HepG2 (cell line): ENCODE measurements at regions of chr11 and their contacts with region 1.

Region 1: DNA sequence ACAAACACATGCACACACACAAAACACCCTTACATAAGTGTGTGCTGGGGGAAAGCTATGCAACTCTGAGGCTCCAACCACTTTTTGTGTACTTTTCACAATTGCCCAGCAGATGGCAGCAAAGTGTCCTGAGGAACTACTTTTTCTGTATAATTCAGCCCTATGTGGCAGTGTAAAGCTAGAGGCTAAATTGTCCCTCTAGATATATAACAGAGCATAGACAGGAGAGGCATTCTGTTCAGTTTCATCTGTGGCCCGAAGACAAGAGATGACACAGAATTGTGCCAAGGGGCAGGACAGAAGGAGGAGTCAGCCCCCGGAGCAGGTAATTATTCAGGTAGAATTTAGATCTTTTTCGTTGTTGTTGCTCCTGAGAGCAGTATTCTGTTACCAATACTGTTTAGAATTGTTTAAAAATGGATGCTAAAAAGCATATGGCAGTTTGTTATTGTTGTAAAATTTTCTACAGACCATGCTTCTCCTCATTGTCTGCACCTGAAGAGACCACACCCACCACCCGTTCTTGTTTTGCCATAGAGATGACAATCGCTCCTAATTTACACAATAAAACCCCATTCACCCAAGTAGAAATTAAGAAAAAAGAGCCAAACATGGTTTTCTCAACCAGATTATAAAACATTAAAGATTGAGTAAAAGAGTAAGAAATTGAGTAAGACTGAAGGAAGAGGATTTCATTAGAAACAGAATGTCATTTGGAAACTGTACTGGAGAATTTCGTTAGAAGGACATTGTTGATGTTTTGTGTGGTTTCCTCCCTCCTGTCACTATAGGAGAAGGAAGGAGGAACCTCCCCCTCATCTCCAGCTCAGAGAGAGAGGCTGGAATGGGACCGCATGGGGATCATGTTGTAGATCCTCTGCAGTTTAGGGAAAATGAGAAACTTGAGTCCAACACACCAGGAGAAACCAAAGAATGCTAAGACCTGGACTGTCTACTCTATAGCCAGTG is 14.5 kb upstream of the MS4A7 start:
- DNase-seq: peak; percentile 58
- ATAC-seq: peak; percentile 79
- H3K4me3 ChIP-seq: no peak overlapping the region
- H3K27ac ChIP-seq: no peak overlapping the region
- H3K4me1 ChIP-seq: no peaks in the 10 kb centered on the region
- H3K27me3 ChIP-seq: peaks cover 0 to 3% of the 10 kb centered on the region in 2 experiments; a peak in 1 of 5 replicates
- CTCF ChIP-seq: peak; percentile 78
- EP300 ChIP-seq: no peak
- POLR2A ChIP-seq: no peak
- RAD21 ChIP-seq: no peak

Region 2: DNA sequence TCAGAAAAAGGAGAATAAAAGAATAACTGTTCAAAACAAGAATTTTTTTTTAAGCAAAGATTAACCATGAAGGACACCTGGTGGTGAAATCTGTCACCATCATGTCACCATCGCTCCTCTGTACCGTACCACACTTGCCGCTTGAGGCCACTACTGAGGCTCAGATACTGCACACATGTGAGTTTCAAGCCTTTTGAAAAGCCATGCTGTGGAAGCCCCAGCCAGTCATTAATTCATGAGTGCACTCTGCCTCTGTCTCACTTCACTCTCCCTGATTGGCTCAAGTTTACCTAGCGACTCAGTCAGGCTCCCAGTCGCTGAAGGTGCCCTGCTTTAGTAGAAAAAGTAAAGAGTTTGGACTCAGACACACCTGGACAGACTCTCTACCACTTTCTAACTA is 122.2 kb after region 1 on chr11:
- CTCF ChIA-PET with region 1: interaction called, 13 read pairs
- POLR2A ChIA-PET with region 1: no interaction called
- in situ Hi-C with region 1: no loop called
- intact Hi-C with region 1: loop called (anchors 2 kb)
- DNase-seq: peak; percentile 54
- ATAC-seq: peak; percentile 100
- H3K4me3 ChIP-seq: no peak overlapping the region
- H3K27ac ChIP-seq: no peak overlapping the region
- H3K4me1 ChIP-seq: no peaks in the 10 kb centered on the region
- H3K27me3 ChIP-seq: no peaks in the 10 kb centered on the region
- CTCF ChIP-seq: peak; percentile 66
- EP300 ChIP-seq: no peak
- POLR2A ChIP-seq: no peak
- RAD21 ChIP-seq: no peak

Region 3: DNA sequence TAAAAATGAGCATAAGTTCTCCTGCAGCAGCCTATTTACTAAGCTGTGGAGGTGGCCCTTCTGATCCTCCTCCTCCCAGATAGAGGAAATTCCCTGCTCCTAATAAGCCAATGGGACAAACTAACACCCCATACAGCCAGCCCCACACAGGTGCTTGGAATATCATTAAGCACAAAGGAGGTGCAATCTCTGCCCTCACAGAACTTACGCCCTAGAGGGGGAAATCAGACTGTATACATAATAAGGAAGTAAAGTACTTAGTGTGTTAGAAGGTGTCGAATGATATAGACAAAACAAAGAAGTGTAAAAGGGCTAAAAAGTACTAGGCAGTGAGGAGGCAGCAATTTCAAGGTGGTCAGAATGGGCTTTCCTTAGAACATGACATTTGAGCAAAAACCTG is 134.6 kb after region 1 on chr11:
- CTCF ChIA-PET with region 1: no interaction called
- POLR2A ChIA-PET with region 1: no interaction called
- in situ Hi-C with region 1: no loop called
- intact Hi-C with region 1: no loop called
- DNase-seq: no peak
- ATAC-seq: no peak
- H3K4me3 ChIP-seq: no peak overlapping the region
- H3K27ac ChIP-seq: no peak overlapping the region
- H3K4me1 ChIP-seq: no peaks in the 10 kb centered on the region
- H3K27me3 ChIP-seq: peaks cover 0 to 3% of the 10 kb centered on the region in 2 experiments; a peak in 1 of 5 replicates
- CTCF ChIP-seq: no peak
- EP300 ChIP-seq: no peak
- POLR2A ChIP-seq: no peak
- RAD21 ChIP-seq: no peak

Region 4: GRCh38 chr11:60615497-60615896 is 251.7 kb after region 1 on chr11:
- CTCF ChIA-PET with region 1: interaction called, 14 read pairs
- POLR2A ChIA-PET with region 1: no interaction called
- in situ Hi-C with region 1: loop called (anchors 5 kb)
- intact Hi-C with region 1: loop called (anchors 1 kb)
- DNase-seq: no peak
- ATAC-seq: no peak
- H3K4me3 ChIP-seq: no peak overlapping the region
- H3K27ac ChIP-seq: no peak overlapping the region
- H3K4me1 ChIP-seq: no peaks in the 10 kb centered on the region
- H3K27me3 ChIP-seq: peaks cover 0 to 2% of the 10 kb centered on the region in 2 experiments; a peak in 2 of 5 replicates
- CTCF ChIP-seq: no peak
- EP300 ChIP-seq: no peak
- POLR2A ChIP-seq: no peak
- RAD21 ChIP-seq: no peak

Region 5: DNA sequence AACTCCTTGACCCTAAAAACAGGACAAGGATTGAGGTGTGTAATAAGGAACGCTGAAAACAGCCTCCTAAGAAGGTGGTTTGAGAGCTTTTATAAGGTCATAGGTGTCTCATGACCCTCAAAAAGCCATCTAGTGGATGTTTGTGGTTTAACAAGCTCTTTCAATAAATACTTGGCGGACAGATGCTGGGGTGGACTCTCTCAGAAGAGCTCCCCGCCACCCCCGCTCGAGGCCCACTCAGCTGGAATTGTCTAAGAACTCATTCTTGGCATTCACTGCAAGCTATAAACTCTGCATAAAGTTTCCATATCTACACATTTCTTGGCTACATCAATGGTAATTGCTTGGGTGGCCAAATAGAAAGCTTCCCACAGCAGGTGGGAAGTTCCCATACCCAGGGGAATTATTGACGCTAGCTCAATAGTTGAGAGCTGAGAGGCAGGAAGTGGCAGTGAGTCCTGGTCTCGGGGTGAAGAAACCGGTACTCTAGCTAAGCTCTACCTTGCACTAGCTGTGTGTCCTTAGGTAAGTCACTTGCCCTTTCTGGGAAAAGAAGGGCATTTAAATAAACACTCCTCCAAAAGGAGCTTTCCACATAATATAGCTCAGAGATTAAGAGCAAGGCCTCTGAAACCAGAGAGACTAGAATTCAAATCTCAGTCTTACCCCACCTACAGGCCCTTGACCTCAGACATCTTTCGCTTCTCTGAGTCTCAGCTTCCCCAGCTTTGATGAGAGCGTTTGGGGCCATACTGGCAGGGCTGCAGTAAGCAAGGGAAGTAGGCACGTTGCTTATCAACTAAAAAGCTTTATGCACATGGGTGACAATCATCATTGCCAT is 399.2 kb after region 1 on chr11:
- CTCF ChIA-PET with region 1: no interaction called
- POLR2A ChIA-PET with region 1: no interaction called
- in situ Hi-C with region 1: no loop called
- intact Hi-C with region 1: loop called (anchors 5 kb)
- DNase-seq: peak; percentile 25
- ATAC-seq: peak; percentile 57
- H3K4me3 ChIP-seq: no peak overlapping the region
- H3K27ac ChIP-seq: no peak overlapping the region
- H3K4me1 ChIP-seq: no peaks in the 10 kb centered on the region
- H3K27me3 ChIP-seq: peaks cover 1 to 29% of the 10 kb centered on the region in 2 experiments; a peak in 2 of 5 replicates
- CTCF ChIP-seq: peak; percentile 17; the same call in 1 of the 2 replicates
- EP300 ChIP-seq: no peak
- POLR2A ChIP-seq: no peak
- RAD21 ChIP-seq: no peak

Region 6: DNA sequence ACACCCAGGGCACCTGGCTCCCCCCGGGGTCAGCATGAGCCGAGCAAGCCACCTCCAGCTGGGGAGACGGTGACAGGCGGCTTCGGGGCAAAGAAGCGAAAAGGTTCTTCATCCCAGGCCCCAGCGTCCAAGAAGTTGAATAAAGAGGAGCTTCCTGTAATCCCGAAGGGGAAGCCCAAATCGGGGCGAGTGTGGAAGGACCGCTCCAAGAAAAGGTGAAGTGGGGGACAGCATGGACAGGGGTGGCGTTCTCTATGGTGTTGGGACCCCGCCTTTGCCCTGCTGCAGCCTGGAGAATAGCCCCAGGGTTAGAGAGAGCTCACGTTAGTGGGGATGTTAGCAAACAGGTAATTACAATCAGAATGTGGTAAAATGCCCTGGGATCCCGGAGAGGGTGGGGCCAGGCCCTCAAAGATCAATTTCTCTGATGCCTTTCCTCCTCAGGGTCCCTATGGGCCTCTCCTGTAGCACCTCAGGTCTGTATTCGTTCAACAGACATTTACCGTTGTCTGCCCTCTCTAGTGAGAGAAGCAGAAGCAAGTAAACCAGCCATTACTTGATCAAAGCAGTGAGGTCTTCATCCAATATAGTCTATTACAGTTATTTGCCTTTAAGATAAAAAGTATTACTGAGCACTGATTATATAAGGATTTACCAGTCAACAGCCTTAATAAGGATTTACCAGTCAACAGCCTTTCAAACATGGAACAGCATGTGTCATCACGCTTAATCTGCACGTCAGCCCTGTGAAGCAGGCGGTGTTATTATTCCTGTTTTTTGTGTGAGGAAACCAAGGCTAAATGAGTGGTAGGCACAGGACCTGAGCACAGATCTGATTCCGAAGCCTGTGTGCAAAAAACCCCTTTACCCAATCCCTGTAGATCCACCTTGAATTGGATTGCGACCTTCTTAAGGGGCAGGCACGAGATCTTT is 479.1 kb after region 1 on chr11:
- CTCF ChIA-PET with region 1: no interaction called
- POLR2A ChIA-PET with region 1: no interaction called
- in situ Hi-C with region 1: no loop called
- intact Hi-C with region 1: no loop called
- DNase-seq: no peak
- ATAC-seq: no peak
- H3K4me3 ChIP-seq: peak overlapping the region; percentile 80 to 97 (median 88)
- H3K27ac ChIP-seq: peak overlapping the region; percentile 68
- H3K4me1 ChIP-seq: peaks cover 41% of the 10 kb centered on the region
- H3K27me3 ChIP-seq: no peaks in the 10 kb centered on the region; a peak in 1 of 5 replicates
- CTCF ChIP-seq: no peak
- EP300 ChIP-seq: no peak
- POLR2A ChIP-seq: no peak
- RAD21 ChIP-seq: no peak